ENCODE measurements at regions of chr12 and their contacts with region 1.

Region 1: DNA sequence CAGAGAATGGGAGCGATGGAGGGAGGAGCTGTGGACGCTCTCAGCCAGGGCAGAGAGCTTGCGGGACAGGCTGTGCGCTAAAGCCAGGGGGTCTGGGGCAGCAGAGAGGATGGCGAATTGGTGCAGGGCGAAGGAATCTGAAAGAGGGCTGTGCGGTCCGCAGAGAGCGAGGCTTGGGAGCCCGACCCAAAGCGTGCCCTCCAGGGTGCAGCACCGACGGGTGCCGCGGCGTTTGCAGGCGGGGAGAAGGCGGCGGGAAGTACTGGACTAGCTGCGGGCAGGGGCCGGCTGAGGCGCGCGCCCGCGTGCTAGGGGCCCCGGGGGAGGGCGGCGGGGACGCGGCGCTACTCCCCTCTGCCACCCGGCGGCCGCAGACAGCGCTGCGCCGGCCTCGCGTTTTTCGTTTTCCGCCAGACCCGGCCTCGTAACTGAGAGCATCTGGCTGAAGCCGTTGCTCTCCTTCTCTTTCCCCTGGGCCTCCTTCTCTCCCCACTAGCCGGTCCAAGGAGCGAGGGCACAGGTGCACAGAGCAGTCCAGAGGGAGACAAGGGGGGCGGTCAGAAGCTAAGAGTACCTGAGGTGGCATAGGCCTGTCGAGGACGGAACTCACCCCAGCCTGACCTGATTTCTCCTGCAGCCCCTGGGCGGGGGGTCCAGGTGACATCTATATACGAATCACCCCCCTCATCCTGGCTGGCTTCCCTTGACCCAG is 24.9 kb downstream of the SLC6A12 start:
- DNase-seq: peak; percentile 61 to 75 (median 73)
- H3K4me3 ChIP-seq: peak overlapping the region in 6 of 7 experiments; percentile 33 to 72 (median 54)
- H3K27ac ChIP-seq: no peak overlapping the region
- H3K4me1 ChIP-seq: peaks cover 0 to 24% (median 19%) of the 10 kb centered on the region in 4 experiments
- H3K27me3 ChIP-seq: peaks cover 0 to 2% (median 0%) of the 10 kb centered on the region in 5 experiments

Region 2: DNA sequence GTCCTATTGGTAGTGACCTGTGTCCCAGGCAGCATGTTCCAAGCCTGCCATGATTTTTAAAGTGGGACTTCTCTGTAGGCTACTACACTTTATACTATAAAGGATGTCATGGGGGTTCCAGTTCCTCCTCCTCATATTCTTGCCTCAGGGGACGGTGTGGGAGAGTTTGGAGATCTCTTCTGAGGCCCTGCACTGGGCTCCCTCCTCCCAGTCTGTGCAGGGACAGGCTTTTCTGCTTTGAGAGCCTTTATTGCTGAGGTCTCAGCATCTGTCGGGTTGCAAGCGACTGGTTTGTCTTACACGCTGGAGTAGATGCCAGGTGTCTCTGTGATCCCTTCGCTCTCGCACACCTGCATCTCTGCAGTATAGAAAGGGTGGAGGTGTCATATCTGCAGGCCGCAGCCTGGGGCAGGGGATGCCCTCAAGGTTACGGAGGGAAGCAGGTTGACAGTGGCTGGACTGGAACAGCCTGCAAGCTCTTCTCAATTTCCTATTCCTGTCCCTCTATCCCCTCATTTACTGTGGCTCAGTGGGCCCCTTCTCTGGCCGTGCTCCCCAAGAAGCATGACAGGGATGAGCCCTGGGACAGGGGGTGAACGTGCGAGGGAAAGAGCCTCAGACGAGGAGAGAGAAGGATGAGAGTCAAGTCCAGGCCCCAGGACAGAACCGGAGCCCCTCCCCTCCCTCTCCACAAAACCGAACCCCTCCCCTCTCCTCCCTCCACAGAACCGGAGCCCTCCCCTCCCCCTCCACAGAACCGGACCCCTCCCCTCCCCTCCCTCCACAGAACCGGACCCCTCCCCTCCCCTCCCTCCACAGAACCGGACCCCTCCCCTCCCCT is 26.4 kb before region 1 on chr12:
- CTCF ChIA-PET with region 1: interaction called, 94 read pairs
- POLR2A ChIA-PET with region 1: no interaction called
- DNase-seq: no peak
- H3K4me3 ChIP-seq: no peak overlapping the region
- H3K27ac ChIP-seq: no peak overlapping the region
- H3K4me1 ChIP-seq: peaks cover 0 to 34% (median under 1%) of the 10 kb centered on the region in 4 experiments
- H3K27me3 ChIP-seq: no peaks in the 10 kb centered on the region

Region 3: GRCh38 chr12:169528-170370 is 19.3 kb before region 1 on chr12:
- CTCF ChIA-PET with region 1: interaction called, 94 read pairs
- POLR2A ChIA-PET with region 1: interaction called, 5 read pairs
- DNase-seq: peak in 2 of 3 donors; percentile 37 to 42
- H3K4me3 ChIP-seq: peak overlapping the region in 1 of 7 experiments; percentile 57
- H3K27ac ChIP-seq: no peak overlapping the region
- H3K4me1 ChIP-seq: peaks cover 0 to 85% (median 54%) of the 10 kb centered on the region in 4 experiments
- H3K27me3 ChIP-seq: no peaks in the 10 kb centered on the region

Region 4: GRCh38 chr12:176321-177181 is 12.5 kb before region 1 on chr12:
- CTCF ChIA-PET with region 1: interaction called, 94 read pairs
- POLR2A ChIA-PET with region 1: interaction called, 5 read pairs
- DNase-seq: no peak
- H3K4me3 ChIP-seq: no peak overlapping the region
- H3K27ac ChIP-seq: no peak overlapping the region
- H3K4me1 ChIP-seq: peaks cover 4 to 72% (median 48%) of the 10 kb centered on the region in 4 experiments
- H3K27me3 ChIP-seq: no peaks in the 10 kb centered on the region

Region 5: DNA sequence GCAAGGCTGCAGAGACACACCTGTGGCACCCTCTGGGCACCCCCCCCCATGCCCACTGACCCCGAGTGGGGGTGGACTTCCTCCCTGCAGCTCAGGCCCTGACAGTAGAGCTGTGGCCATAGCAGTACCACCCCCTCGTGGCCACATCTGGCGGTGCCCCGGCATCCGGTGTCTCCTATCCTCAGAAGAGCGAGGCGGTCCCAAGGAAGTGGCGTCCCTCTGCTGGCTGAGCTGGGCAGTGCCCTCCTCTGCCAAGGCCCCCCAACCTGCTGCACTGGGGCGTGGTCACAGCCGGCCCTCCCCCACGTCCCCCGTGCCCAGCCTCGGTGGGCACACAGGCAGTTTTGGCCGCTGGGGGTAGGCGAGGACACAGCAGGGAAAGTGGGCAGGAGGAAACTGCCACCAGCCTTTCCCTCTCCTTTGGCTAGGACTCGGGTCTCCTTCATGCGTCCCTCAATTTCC is 30.9 kb after region 1 on chr12:
- CTCF ChIA-PET with region 1: interaction called, 11 read pairs
- POLR2A ChIA-PET with region 1: no interaction called
- DNase-seq: peak; percentile 85 to 91 (median 91)
- H3K4me3 ChIP-seq: peak overlapping the region in 4 of 7 experiments; percentile 3 to 44 (median 23)
- H3K27ac ChIP-seq: no peak overlapping the region
- H3K4me1 ChIP-seq: peaks cover 0 to 7% (median 2%) of the 10 kb centered on the region in 4 experiments
- H3K27me3 ChIP-seq: no peaks in the 10 kb centered on the region